ENCODE measurements at regions of chr9 and their contacts with region 1.

Region 1: DNA sequence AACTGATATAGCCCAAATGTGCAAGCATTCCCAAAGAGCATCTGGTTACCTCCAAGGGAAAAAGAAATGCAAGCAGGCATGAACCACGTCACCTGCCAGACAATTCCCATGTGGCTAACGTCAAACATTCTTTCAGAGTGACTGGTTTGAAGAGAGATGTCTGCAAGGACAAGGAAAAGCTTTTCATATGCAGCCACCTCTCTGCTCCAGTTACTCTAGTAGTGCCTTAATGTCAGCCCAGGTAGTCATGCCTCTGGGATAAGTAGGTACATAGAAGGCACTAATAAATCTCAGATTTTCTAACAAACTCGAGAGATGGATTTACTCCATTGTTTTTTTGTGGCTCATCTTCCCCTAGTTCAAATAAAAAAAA is 96.8 kb upstream of the IFNK start:
- DNase-seq: no peak
- ATAC-seq: peak in 1 of 4 donors; percentile 38
- H3K4me3 ChIP-seq: no peak overlapping the region
- H3K27ac ChIP-seq: no peak overlapping the region
- H3K4me1 ChIP-seq: peaks cover 0 to 28% (median 4%) of the 10 kb centered on the region in 12 donors
- H3K27me3 ChIP-seq: no peaks in the 10 kb centered on the region
- CTCF ChIP-seq: no peak
- POLR2A ChIP-seq: no peak

Region 2: DNA sequence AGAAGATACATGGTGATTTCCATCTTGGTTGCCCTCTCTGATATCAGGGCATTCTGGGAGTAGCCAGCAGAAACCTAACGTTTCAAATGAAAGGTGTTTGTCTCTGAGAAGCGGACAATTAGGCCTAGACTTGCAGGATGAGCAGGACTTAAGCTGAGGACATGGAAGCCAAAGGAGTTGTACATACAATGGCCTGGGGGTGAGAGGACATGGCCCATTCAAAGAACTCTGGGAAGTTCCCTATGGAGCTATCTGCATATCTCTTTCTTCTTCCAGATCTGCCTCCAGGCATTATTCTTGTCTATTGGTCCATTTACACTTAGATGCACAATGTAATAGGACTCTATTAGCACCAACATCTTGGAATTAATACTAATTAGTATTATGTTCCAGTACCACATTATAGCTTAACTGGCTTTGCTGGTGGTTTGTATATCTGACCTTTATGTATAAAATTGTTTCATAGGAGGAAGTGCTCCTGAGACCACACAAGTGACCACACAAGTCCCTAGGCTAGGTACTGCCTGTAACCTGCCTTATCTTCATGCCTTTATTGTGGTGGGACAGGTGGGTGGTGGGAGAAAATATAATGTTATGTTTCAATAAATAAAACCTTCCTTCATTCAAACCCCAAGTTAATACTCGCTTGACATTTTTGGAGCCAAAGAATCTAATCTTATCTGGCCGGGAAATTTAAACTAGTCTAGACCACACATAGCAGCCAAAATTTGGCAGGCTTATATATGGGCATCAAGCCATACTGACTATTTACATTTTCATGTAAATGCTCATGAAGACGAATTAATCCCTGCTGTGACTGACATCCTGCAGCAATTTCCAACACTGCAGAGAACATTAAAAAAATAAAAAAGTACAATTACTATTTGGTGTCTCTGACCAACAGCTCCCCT is 78.2 kb before region 1 on chr9:
- intact Hi-C with region 1: loop called in 1 of 10 experiments (anchors 5 kb)
- DNase-seq: no peak
- ATAC-seq: no peak
- H3K4me3 ChIP-seq: no peak overlapping the region
- H3K27ac ChIP-seq: no peak overlapping the region
- H3K4me1 ChIP-seq: peaks cover 0 to 51% (median 10%) of the 10 kb centered on the region in 12 donors
- H3K27me3 ChIP-seq: no peaks in the 10 kb centered on the region
- CTCF ChIP-seq: no peak
- POLR2A ChIP-seq: no peak

Region 3: GRCh38 chr9:27473111-27473529 is 45.9 kb after region 1 on chr9:
- intact Hi-C with region 1: loop called in 1 of 10 experiments (anchors 5 kb)
- DNase-seq: peak in 1 of 5 donors; percentile 40
- ATAC-seq: peak; percentile 40 to 79 (median 66)
- H3K4me3 ChIP-seq: no peak overlapping the region
- H3K27ac ChIP-seq: peak overlapping the region in 5 of 12 donors; percentile 0 to 63 (median 27)
- H3K4me1 ChIP-seq: peaks cover 0 to 62% (median 13%) of the 10 kb centered on the region in 12 donors
- H3K27me3 ChIP-seq: no peaks in the 10 kb centered on the region
- CTCF ChIP-seq: no peak
- POLR2A ChIP-seq: no peak

Region 4: GRCh38 chr9:27485158-27485557 is 57.9 kb after region 1 on chr9:
- intact Hi-C with region 1: no loop called
- DNase-seq: no peak
- ATAC-seq: no peak
- H3K4me3 ChIP-seq: no peak overlapping the region
- H3K27ac ChIP-seq: no peak overlapping the region
- H3K4me1 ChIP-seq: peaks cover 0 to 4% (median 0%) of the 10 kb centered on the region in 12 donors
- H3K27me3 ChIP-seq: no peaks in the 10 kb centered on the region
- CTCF ChIP-seq: no peak
- POLR2A ChIP-seq: no peak

Region 5: GRCh38 chr9:28086881-28087280 is 659.6 kb after region 1 on chr9:
- intact Hi-C with region 1: no loop called
- DNase-seq: no peak
- ATAC-seq: no peak
- H3K4me3 ChIP-seq: no peak overlapping the region
- H3K27ac ChIP-seq: no peak overlapping the region
- H3K4me1 ChIP-seq: no peaks in the 10 kb centered on the region
- H3K27me3 ChIP-seq: no peaks in the 10 kb centered on the region
- CTCF ChIP-seq: no peak
- POLR2A ChIP-seq: no peak